Activated CD4-positive, alpha-beta T cell treated with anti-CD3 and anti-CD28 coated beads for 36 hours (primary cell): ENCODE measurements at regions of chr11 and their contacts with region 1.

Region 1: DNA sequence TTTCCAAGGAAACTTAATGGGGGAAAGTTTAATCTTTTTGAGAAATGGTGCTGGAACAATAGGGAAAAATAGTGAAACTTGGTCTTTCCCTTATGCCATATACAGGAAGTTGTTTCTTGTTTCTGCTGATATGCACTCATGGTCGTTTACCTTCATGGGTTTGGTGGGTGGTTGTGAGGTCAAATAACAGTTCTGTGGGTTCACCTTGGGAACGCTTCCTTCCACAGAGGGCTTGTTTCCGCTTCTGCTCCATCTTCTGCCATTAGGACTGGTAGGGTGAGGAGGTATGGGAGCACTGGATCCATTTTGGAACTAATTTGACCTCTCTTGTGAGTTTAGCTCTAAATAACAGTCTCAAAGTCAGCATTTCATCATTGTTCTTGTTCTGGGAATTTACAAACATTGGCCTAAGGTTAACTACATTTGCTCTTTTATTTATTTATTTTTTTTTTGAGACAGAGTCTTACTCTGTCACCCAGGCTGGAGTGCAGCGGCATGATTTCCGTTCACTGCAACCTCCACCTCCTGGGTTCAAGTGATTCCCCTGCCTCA is 17.6 kb upstream of the RELA start:
- DNase-seq: no peak
- ATAC-seq: no peak
- H3K4me3 Mint-ChIP-seq: no peak overlapping the region
- H3K27ac Mint-ChIP-seq: no peak overlapping the region
- H3K4me1 Mint-ChIP-seq: no peaks in the 10 kb centered on the region
- H3K27me3 Mint-ChIP-seq: peaks cover 2% of the 10 kb centered on the region

Region 2: DNA sequence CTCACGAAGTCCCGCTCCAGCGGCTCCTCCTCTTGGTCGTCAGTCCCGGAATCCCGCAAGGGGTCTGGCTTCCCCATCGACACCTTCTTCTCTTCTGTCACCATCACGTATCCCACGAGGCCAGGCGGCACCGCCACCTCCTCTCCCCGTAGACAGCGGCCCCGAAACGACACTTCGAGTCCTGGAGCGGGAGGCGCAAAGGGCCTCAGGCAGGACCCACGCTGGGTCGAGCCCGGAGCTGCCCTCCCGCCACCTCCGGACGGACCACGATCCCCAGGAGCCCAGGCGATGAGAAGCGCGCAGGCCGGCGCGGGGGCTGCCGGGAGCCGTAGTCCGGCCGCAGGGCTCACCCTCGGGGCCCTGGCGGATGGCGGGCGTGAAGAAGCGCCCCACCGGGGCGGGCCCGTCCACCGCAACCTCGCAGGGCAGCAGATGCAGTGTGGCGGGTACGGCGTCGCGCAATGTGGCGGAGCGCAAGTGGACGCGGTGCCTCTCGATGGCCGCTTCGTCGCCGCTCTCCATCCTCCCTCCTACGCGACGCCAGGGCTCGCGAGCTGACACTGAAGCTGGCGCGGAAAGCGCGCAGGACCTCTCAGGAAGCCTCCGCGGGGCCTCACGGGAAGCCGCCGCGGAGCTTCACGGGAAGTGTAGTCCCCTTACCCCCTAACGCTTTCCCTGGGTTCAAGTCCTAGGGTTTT is 40.1 kb after region 1 on chr11 and contains the start of gene RNASEH2C:
- CTCF ChIA-PET with region 1: no interaction called
- POLR2A ChIA-PET with region 1: no interaction called
- intact Hi-C with region 1: no loop called
- DNase-seq: peak; percentile 92
- ATAC-seq: peak; percentile 94
- H3K4me3 Mint-ChIP-seq: peak within 1 kb of the TSS; percentile 84
- H3K27ac Mint-ChIP-seq: peak within 1 kb of the TSS; percentile 88
- H3K4me1 Mint-ChIP-seq: peaks cover 23% of the 10 kb centered on the region
- H3K27me3 Mint-ChIP-seq: no peaks in the 10 kb centered on the region
- total RNA-seq, gene RNASEH2C: 72.5 to 96.8 TPM

Region 3: GRCh38 chr11:65745046-65745445 is 64.8 kb after region 1 on chr11:
- CTCF ChIA-PET with region 1: no interaction called
- POLR2A ChIA-PET with region 1: no interaction called
- intact Hi-C with region 1: loop called in 1 of 2 experiments (anchors 5 kb)
- DNase-seq: no peak
- ATAC-seq: no peak
- H3K4me3 Mint-ChIP-seq: no peak overlapping the region
- H3K27ac Mint-ChIP-seq: no peak overlapping the region
- H3K4me1 Mint-ChIP-seq: no peaks in the 10 kb centered on the region
- H3K27me3 Mint-ChIP-seq: peaks cover 16% of the 10 kb centered on the region